Naive thymus-derived CD8-positive, alpha-beta T cell (primary cell): ENCODE measurements at regions of chr17 and their contacts with region 1.

Region 1: GRCh38 chr17:7351665-7352501 is at the start of gene KCTD11:
- DNase-seq: peak; percentile 51 to 81 (median 62)
- ATAC-seq: peak; percentile 38 to 51
- H3K4me3 Mint-ChIP-seq: peak within 1 kb of the TSS; percentile 74 to 92 (median 86)
- H3K27ac Mint-ChIP-seq: peak within 1 kb of the TSS; percentile 78 to 91 (median 86)
- H3K4me1 Mint-ChIP-seq: peaks cover 19 to 82% (median 55%) of the 10 kb centered on the region in 4 donors
- H3K27me3 Mint-ChIP-seq: no peaks in the 10 kb centered on the region
- polyA plus RNA-seq, gene KCTD11: 1.2 to 1.6 (median 1.3) TPM

Region 2: GRCh38 chr17:7306911-7307686 is 44.8 kb before region 1 on chr17 and contains the start of gene EIF5A:
- POLR2A ChIA-PET with region 1: interaction called, 11 read pairs
- DNase-seq: peak; percentile 98 to 100 (median 100)
- ATAC-seq: peak; percentile 68 to 70
- H3K4me3 Mint-ChIP-seq: peak within 1 kb of the TSS; percentile 90 to 99 (median 96)
- H3K27ac Mint-ChIP-seq: peak within 1 kb of the TSS; percentile 96 to 100 (median 99)
- H3K4me1 Mint-ChIP-seq: peaks cover 23 to 40% (median 37%) of the 10 kb centered on the region in 4 donors
- H3K27me3 Mint-ChIP-seq: peaks cover 0 to 4% (median 0%) of the 10 kb centered on the region in 5 donors
- polyA plus RNA-seq, gene EIF5A: 209 to 690 (median 643) TPM

Region 3: DNA sequence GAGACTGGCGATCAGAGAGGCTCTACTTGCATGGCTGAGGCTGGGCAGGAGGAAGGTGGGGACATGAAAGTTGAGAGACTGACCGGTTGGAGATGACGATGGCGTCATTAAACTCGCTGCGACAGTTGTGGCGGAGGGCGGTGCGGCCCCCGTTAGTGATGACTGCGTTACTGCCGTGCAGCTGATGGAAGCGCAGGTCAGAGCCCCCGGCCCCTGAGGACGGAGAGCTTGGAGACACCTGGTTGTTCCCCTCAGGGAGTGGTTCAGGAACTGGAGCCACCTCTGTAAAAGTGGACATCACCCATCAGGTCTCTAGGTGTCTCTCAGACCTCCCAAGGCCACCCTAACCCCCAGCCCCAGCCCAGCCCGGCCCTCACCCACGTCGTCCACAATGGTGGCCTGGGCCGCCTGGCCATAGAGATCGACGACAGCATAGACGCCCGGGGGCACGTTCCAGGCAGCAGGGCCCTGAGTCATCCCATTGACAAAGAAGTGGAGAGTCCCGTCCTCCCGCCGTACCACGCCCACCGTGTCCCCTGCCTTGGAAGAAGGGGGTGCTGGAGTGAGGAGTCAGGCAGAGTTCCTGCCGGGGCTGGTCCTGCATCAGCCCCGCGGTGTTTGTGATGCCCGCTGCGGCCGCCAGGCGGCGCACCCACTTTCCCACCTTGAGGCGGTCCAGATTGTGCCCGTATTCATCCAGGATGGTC is 28.0 kb before region 1 on chr17:
- POLR2A ChIA-PET with region 1: interaction called, 45 read pairs
- DNase-seq: peak in 9 of 10 donors; percentile 34 to 77 (median 62)
- ATAC-seq: peak; percentile 41 to 53
- H3K4me3 Mint-ChIP-seq: no peak overlapping the region
- H3K27ac Mint-ChIP-seq: peak overlapping the region in 4 of 10 donors; percentile 31 to 65 (median 50)
- H3K4me1 Mint-ChIP-seq: peaks cover 17 to 31% (median 19%) of the 10 kb centered on the region in 4 donors
- H3K27me3 Mint-ChIP-seq: no peaks in the 10 kb centered on the region

Region 4: GRCh38 chr17:7336240-7337175 is 15.4 kb before region 1 on chr17 and contains the start of gene ACAP1:
- POLR2A ChIA-PET with region 1: interaction called, 109 read pairs
- DNase-seq: peak; percentile 74 to 93 (median 82)
- ATAC-seq: peak; percentile 94
- H3K4me3 Mint-ChIP-seq: peak within 1 kb of the TSS; percentile 92 to 98 (median 95)
- H3K27ac Mint-ChIP-seq: peak within 1 kb of the TSS; percentile 77 to 99 (median 98)
- H3K4me1 Mint-ChIP-seq: peaks cover 26 to 69% (median 64%) of the 10 kb centered on the region in 4 donors
- H3K27me3 Mint-ChIP-seq: no peaks in the 10 kb centered on the region
- polyA plus RNA-seq, gene ACAP1: 246 to 295 (median 283) TPM

Region 5: GRCh38 chr17:7435221-7435675 is 83.4 kb after region 1 on chr17 and contains the start of gene TMEM102:
- POLR2A ChIA-PET with region 1: interaction called, 65 read pairs
- DNase-seq: peak; percentile 94 to 99 (median 98)
- ATAC-seq: peak; percentile 74 to 82
- H3K4me3 Mint-ChIP-seq: peak within 1 kb of the TSS; percentile 90 to 98 (median 95)
- H3K27ac Mint-ChIP-seq: peak within 1 kb of the TSS; percentile 91 to 99 (median 98)
- H3K4me1 Mint-ChIP-seq: peaks cover 20 to 45% (median 37%) of the 10 kb centered on the region in 4 donors
- H3K27me3 Mint-ChIP-seq: peaks cover 3 to 18% (median 9%) of the 10 kb centered on the region in 5 donors
- polyA plus RNA-seq, gene TMEM102: 9.8 to 19.1 (median 12.1) TPM